Right ventricle myocardium superior (tissue), 1 donor: ENCODE measurements at regions of chr19 and their contacts with region 1.

Region 1: GRCh38 chr19:5577785-5578493 is 10.2 kb upstream of the TINCR start:
- DNase-seq: peak; percentile 76
- ATAC-seq: peak; percentile 89

Region 2: DNA sequence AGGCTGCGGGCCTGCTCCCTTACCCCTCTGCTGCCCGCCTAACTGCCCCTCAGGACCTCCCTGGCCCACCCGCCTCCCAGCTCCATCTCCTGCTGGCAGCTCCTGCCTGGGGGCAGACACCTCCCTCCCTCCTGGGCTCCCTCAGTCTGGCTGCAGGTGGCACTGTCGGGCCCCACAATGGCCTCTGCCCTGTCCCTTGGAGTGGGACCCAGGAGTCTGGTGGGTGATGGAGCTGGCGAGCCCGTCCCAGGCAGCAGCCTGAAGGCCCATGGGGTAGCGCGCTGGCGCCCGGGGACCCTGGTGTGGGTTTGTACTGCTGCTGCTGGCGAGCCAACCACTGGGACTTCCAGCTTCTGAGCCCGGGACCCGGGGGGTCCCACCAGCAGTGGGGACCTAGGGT is 525.4 kb before region 1 on chr19:
- intact Hi-C with region 1: loop called (anchors 5 kb)
- DNase-seq: no peak
- ATAC-seq: no peak